ENCODE measurements at regions of chr3 and their contacts with region 1.

Region 1: DNA sequence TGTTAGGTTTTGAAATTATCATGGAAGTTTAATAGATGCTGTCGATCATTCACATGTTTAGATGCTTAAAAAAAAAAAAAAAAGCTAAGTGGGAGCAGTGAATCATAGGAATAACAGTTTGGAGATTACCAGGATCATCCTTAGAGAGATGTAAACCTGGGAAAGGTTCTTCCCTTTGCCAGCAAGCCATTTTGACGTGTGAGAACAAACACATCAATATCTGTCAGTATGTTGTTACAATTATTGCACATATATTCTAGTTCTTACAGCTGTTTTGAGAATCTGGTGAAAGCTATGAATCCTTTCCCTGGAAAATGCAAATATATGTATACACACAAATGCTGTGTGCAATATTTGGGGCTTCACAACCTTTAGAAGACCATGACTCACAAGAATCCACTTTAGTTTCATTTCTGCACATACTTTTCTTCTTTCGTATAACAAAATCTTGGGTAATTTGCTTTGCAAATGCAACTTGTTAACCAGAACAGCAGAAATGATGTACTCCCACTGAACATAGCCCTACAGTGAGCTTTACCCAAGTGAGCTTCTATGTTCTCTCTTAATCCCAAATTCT is 12.0 kb downstream of the NFKBIZ start:
- DNase-seq: no peak
- H3K4me3 Mint-ChIP-seq: no peak overlapping the region
- H3K27ac Mint-ChIP-seq: peak overlapping the region; percentile 72
- H3K4me1 Mint-ChIP-seq: peaks cover 47% of the 10 kb centered on the region
- H3K27me3 Mint-ChIP-seq: no peaks in the 10 kb centered on the region

Region 2: DNA sequence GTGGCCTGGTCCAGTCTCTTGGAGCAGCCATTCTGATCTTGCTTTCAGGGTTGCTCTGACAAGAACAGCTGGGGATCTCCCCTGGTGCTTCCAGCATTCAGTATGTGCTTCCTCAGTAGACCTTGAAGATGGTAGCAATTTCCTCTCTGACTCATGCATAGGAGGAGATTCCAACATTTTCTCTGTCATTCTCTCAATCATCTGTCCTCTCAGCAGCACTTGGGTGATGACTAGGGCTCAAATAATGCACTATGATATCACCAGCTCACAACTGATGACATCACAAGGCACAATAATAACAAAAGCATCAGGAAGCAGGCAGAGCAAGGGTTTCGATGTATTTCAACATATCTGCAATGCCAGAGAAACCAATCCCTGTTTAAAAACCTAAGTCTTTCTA is 40.7 kb after region 1 on chr3:
- intact Hi-C with region 1: loop called (anchors 5 kb)
- DNase-seq: no peak
- H3K4me3 Mint-ChIP-seq: no peak overlapping the region
- H3K27ac Mint-ChIP-seq: no peak overlapping the region
- H3K4me1 Mint-ChIP-seq: peaks cover 7% of the 10 kb centered on the region
- H3K27me3 Mint-ChIP-seq: peaks cover 5% of the 10 kb centered on the region

Region 3: DNA sequence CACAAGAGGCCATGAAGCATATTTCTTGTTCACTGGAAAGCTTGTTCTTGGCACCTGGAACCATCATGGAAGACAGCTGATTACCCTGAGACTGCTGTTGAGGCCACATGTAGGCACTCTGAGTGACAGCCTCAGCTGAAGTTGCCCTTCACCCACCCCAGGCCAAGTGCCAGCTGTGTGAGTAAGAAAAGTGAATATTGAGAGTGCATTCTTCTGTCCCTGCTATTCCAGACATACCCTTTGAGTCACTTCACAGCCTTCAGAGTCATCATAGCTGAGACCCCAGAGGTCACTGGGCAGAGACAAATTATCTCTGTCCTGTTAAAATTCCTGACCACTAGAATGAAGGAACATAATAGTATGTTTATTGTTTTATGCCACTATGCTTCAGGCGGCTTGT is 67.6 kb after region 1 on chr3:
- intact Hi-C with region 1: loop called (anchors 5 kb)
- DNase-seq: no peak
- H3K4me3 Mint-ChIP-seq: no peak overlapping the region
- H3K27ac Mint-ChIP-seq: no peak overlapping the region
- H3K4me1 Mint-ChIP-seq: peaks cover 24% of the 10 kb centered on the region
- H3K27me3 Mint-ChIP-seq: peaks cover 11% of the 10 kb centered on the region

Region 4: GRCh38 chr3:102174312-102174712 is 313.0 kb after region 1 on chr3:
- intact Hi-C with region 1: no loop called
- DNase-seq: no peak
- H3K4me3 Mint-ChIP-seq: no peak overlapping the region
- H3K27ac Mint-ChIP-seq: no peak overlapping the region
- H3K4me1 Mint-ChIP-seq: no peaks in the 10 kb centered on the region
- H3K27me3 Mint-ChIP-seq: peaks cover 17% of the 10 kb centered on the region